Right ventricle myocardium inferior (tissue), 1 donor: ENCODE measurements at regions of chr14 and their contacts with region 1.

Region 1: DNA sequence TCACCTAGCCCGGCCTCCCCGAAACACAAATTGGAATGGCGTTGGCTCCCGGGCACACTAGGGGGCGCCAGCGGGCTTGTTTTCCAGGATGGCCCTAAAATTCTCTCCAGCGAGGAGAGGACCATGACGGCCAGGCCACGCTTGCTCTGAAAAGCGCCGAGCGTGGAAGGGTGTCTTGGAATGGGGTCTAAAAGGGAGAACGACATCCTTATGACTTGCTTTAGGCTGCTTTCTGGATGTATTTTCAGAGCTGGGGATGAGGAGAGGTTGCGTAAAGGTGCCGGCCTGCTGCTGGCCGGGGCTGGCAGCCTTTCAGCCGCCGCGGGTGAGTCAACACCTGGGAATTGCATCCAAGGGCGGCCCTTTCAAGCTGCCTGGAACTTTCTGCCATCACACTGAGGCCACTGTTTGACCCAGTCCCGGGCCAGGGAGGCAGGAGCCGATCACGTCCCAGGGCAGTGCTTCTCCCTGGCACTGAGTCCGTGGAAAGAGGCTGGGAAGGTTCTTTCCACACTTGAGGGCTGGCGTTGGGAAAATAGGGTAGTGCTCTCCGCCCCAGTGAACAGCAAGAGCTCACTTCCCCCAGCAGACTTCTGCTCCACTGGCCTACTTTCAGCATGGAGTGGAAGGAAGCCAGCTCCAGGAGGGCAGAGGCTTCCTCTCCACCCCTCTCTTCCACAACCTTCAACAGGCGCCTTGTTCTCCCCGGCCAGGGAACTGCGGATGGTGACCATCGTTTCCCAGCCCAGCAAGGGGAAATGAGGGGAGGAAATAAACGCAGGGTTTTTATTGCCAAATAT is 216.2 kb downstream of the TTC8 start:
- DNase-seq: peak; percentile 91
- ATAC-seq: peak; percentile 94

Region 2: DNA sequence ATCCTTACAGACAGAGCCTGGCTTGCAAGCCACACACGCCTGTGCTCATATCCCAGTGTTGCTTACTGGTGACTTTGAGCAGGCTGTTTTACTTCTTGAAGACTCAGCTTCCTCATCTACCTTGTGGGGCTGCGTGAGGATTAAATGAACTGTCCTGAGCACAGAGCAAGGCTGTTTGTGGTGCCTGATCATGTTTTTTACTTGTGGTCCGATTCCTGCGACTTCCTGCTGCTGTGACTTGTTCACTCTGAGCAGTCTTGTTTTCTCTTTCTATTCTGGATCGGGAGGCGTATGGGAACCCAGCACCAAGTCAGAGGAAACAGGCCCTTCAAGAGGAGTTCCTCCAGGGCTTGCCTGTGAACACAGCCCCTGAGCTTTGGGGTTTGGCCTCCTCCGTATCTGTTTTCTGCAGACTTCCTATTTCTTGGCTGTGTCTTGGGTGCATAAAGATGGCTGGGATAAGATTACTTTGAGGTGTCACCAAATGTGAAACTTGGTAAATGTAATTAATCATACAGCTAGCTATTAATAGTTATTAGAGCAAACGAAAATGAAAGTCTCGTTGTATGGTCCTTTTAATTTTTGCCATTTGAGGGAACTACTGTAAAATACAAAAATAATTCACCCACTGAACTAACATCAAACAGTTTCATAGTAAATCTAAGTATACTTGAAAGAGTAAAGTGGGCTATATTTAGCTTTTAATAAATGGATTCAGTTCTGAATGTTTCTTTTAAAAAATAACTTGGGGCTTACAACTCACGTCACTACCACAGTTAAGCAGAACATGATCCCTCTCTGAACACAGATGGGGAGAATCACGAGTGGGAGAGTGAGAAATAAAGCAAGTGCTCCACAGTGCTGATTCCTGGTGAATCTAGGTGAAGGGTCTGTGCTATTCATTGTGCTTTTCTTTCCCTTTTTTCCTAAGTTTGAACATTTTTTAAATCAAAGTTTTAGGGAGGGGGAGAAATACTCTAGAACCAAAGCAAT is 124.8 kb after region 1 on chr14:
- intact Hi-C with region 1: loop called (anchors 5 kb)
- DNase-seq: no peak
- ATAC-seq: peak; percentile 51

Region 3: GRCh38 chr14:89237921-89238529 is 197.4 kb after region 1 on chr14:
- intact Hi-C with region 1: loop called (anchors 10 kb)
- DNase-seq: no peak
- ATAC-seq: no peak

Region 4: DNA sequence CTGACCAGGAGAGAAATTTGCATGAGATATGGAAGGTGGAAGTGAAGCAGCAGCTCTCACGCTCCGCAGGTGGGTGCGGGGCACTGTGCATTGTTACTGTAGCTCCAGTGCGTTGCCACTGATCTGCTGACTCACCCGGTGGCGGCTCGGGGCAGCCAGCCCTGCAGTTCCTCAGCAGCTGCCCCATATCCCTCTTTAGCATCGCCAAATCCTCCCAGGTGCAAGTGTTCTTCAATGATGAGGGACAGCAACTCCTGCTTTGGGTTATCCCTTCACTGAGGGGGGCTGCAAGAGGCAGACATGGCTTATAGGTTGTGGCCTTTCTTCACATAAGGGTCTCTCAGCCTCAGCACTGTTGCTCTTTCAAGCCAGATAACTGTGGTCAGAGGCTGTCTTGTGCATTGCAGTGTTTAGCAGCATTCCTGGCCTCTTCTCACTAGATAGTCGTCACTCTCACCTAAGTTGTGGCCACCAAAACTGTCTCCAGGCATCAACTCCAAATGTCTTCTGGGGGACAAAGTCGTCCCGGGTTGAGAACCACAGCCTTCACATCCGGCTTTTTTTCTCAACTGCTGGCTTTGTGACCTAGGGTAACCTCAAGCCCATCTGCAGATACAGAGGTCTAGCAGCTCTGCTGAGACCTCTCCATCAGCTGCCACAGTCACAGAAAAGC is 733.1 kb after region 1 on chr14:
- intact Hi-C with region 1: loop called (anchors 5 kb)
- DNase-seq: peak; percentile 90
- ATAC-seq: peak; percentile 28

Region 5: GRCh38 chr14:89899917-89900663 is 859.4 kb after region 1 on chr14:
- intact Hi-C with region 1: loop called (anchors 2 kb)
- DNase-seq: no peak
- ATAC-seq: no peak

Region 6: DNA sequence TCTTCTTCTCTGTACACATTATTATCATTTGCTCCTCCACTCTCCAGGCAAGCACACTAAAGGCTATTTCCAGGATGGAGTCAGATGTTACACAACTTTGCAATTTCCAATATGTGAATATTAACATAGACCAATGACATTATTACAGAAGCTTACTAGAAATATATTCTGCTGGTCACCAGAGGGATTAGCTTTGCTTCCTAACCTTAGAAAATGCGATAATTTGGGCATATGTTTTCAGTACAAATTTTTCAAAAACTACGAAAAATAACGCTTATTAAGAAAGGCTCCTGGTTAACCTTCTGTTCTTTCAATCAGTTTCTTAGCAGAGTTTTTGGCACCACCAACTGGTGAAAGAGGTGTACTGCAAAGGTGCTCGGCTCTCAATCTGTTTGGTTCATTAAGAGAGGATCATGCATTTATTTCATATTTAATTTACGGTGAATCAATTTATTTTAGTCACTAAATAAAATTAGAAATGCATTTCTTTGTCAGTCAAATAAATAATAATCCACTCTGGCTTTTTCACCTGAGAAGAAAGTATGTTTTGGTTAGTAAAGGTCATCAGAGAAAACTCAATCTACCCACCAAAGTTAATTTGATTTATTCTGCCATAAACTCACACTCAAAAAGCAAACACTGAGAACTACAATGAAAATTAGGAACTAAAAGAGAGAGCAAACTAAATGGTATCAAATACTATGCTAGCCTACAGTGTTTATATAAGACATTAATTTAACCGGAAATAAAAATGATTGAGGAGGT is 874.6 kb after region 1 on chr14:
- intact Hi-C with region 1: loop called (anchors 5 kb)
- DNase-seq: no peak
- ATAC-seq: peak; percentile 57